Heart right ventricle (tissue), 16 donors: ENCODE measurements at regions of chr6 and their contacts with region 1.

Region 1: DNA sequence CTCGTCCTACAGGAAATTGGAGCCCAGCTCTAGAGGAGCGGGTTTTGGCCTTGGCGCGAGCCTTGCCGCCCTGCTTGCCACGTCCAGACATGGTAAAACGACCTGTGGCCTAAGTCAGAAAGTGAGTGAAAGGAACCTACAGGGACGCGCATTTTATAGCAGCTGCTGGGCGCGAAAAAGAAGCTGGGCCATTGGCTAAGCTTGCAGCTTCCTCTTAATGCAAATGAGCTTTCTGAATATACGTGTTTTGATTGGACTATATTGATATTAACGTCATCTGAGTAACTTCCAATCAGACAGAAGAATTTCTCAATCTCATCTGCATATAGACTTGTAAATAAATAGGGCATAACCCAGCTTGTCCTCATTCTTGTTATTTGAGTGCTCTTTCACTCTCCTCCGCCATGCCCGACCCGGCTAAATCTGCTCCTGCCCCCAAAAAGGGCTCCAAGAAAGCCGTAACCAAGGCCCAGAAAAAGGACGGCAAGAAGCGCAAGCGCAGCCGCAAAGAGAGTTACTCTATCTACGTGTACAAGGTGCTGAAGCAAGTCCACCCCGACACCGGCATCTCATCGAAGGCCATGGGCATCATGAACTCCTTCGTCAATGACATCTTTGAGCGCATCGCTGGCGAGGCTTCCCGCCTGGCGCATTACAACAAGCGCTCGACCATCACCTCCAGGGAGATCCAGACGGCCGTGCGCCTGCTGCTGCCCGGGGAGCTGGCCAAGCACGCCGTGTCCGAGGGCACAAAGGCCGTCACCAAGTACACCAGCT is 18.9 kb downstream of the OR2B2 start:
- DNase-seq: peak; percentile 56 to 77
- ATAC-seq: peak; percentile 39 to 69 (median 52)
- H3K4me3 ChIP-seq: peak overlapping the region; percentile 26 to 93 (median 64)
- H3K27ac ChIP-seq: peak overlapping the region in 7 of 10 donors; percentile 17 to 92 (median 38)
- H3K4me1 ChIP-seq: peaks cover 0 to 49% (median 28%) of the 10 kb centered on the region in 9 donors
- H3K27me3 ChIP-seq: peaks cover 0 to 48% (median 45%) of the 10 kb centered on the region in 7 donors
- CTCF ChIP-seq: no peak

Region 2: DNA sequence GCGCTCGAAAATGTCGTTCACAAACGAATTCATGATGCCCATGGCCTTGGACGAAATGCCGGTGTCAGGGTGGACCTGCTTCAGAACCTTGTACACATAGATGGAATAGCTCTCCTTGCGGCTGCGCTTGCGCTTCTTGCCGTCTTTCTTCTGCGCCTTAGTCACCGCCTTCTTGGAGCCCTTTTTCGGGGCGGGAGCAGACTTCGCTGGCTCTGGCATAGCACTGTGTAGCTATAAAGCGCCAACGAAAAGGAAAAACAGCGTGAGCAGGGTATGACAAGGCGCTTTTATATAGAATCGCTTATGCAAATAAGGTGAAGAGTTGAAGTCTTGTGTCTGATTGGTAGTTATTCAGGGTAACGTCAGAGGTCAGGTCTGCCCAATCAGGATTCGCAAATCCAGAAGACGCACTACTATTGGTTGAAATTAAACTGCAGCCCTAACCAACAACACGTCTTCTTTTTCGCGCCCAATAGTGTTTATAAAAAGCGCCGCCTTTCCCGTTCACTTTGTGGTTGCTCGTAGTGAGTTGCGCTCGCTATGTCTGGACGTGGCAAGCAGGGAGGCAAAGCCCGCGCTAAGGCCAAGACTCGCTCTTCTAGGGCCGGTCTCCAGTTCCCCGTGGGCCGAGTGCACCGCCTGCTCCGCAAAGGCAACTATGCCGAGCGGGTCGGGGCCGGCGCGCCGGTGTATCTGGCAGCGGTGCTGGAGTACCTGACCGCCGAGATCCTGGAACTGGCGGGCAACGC is 760.5 kb before region 1 on chr6:
- intact Hi-C with region 1: loop called in 2 of 10 experiments (anchors 10 kb)
- DNase-seq: peak; percentile 72 to 91
- ATAC-seq: peak; percentile 95 to 97 (median 96)
- H3K4me3 ChIP-seq: peak overlapping the region; percentile 31 to 67 (median 64)
- H3K27ac ChIP-seq: peak overlapping the region; percentile 11 to 90 (median 79)
- H3K4me1 ChIP-seq: peaks cover 0 to 42% (median 14%) of the 10 kb centered on the region in 9 donors
- H3K27me3 ChIP-seq: no peaks in the 10 kb centered on the region
- CTCF ChIP-seq: peak in 1 of 9 donors; percentile 6

Region 3: DNA sequence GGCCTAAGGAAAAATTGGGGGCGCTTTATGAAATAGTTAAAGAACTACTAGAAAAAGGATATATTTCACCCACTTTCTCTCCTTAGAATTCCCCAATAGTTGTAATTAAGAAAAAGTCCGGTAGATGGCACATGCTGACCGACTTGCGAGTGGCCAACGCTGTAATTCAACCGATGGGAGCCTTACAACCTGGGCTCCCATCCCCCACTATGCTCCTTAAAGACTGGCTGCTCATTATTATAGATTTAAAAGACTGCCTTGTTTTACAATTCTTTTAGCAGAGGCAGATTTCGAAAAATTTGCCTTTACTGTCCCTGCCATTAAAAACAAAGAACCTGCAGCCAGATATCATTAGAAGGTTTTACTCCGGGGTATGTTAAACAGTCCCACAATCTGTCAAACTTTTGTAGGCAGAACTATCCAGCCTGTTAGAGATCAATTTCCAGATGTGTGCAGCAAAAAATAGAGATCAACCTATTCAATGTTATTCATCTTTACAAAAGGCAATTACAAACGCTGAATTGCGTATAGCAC is 704.3 kb before region 1 on chr6:
- intact Hi-C with region 1: loop called in 5 of 10 experiments (anchors 2 to 10 kb)
- DNase-seq: peak in 1 of 2 donors; percentile 59
- ATAC-seq: peak; percentile 88 to 97 (median 93)
- H3K4me3 ChIP-seq: peak overlapping the region; percentile 38 to 73 (median 64)
- H3K27ac ChIP-seq: peak overlapping the region in 9 of 10 donors; percentile 49 to 80 (median 63)
- H3K4me1 ChIP-seq: peaks cover 0 to 12% (median 4%) of the 10 kb centered on the region in 9 donors
- H3K27me3 ChIP-seq: peaks cover 0 to 10% (median 0%) of the 10 kb centered on the region in 7 donors
- CTCF ChIP-seq: peak; percentile 70 to 87 (median 79)

Region 4: DNA sequence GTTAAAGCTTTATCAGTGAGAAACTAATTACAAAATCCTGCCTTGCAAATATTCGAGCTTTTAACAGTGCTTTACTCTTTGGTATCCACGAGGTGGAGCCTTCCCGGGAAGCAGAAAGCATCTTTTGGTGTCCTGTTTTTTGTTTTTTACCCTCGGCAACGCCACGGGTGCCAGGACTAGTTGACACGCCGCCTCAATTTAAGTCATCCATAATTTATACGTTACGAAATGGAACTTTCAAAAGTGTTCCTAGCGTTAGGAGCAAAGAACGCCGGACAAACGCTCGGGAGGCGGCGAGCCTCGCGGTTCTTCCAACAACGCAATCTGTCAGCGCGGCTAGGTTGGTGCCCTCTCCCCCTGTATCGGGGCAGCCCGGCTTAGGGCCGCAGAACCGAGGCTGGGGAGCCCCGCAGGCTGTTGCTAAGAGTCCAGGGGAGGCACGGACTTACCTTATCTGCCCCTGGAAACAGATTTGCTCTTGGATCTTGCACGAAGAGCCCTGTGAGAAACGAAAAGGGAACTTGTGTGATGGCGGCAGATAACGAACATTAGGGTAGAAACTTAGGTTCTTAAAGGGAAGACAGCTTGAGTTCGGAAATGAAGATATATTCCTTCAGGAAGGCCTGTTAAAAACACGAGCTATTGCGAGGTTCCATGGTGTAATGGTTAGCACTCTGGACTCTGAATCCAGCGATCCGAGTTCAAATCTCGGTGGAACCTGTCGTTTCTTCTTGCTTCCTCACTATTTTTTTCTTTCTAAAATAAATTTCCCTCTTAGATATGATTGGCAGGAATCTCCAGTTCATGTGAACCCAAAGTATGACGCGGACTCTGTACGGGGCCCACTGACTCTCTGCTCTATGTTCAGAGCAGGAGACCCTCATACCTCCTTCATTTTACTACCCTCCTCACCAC is 374.1 kb before region 1 on chr6:
- intact Hi-C with region 1: loop called in 5 of 10 experiments (anchors 2 to 10 kb)
- DNase-seq: peak; percentile 43 to 55
- ATAC-seq: peak; percentile 87 to 97 (median 94)
- H3K4me3 ChIP-seq: peak overlapping the region; percentile 52 to 94 (median 72)
- H3K27ac ChIP-seq: peak overlapping the region; percentile 27 to 89 (median 81)
- H3K4me1 ChIP-seq: peaks cover 0 to 12% (median 7%) of the 10 kb centered on the region in 9 donors
- H3K27me3 ChIP-seq: peaks cover 0 to 29% (median 22%) of the 10 kb centered on the region in 7 donors
- CTCF ChIP-seq: peak; percentile 49 to 80 (median 65)

Region 5: GRCh38 chr6:27809939-27810767 is 83.1 kb before region 1 on chr6:
- intact Hi-C with region 1: loop called in 1 of 10 experiments (anchors 10 kb)
- DNase-seq: peak; percentile 54 to 78
- ATAC-seq: peak; percentile 81 to 86 (median 82)
- H3K4me3 ChIP-seq: peak overlapping the region; percentile 11 to 69 (median 61)
- H3K27ac ChIP-seq: peak overlapping the region in 9 of 10 donors; percentile 34 to 92 (median 75)
- H3K4me1 ChIP-seq: peaks cover 0 to 53% (median 9%) of the 10 kb centered on the region in 9 donors
- H3K27me3 ChIP-seq: peaks cover 6 to 95% (median 47%) of the 10 kb centered on the region in 7 donors
- CTCF ChIP-seq: peak in 1 of 9 donors; percentile 24

Region 6: DNA sequence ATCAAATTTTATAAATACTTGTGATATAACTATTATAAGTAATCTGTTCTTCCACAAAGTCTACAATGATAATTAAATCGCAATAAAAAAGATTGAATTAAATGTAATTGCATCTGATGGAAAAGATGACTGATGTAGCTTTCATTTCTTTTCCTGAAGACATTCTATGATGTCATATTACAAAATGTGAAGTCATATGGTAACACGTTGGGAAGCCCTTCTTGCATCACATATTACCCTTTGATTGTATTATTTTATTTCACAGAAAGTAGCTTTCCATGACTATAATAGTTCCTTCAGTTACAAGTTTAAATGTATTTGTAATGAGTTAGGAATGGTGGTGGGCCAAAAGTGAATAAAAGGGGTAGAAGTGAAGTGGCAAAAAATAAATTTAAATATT is 38.0 kb after region 1 on chr6:
- intact Hi-C with region 1: no loop called
- DNase-seq: no peak
- ATAC-seq: no peak
- H3K4me3 ChIP-seq: no peak overlapping the region
- H3K27ac ChIP-seq: no peak overlapping the region
- H3K4me1 ChIP-seq: no peaks in the 10 kb centered on the region
- H3K27me3 ChIP-seq: peaks cover 0 to 29% (median 16%) of the 10 kb centered on the region in 7 donors
- CTCF ChIP-seq: no peak

Region 7: DNA sequence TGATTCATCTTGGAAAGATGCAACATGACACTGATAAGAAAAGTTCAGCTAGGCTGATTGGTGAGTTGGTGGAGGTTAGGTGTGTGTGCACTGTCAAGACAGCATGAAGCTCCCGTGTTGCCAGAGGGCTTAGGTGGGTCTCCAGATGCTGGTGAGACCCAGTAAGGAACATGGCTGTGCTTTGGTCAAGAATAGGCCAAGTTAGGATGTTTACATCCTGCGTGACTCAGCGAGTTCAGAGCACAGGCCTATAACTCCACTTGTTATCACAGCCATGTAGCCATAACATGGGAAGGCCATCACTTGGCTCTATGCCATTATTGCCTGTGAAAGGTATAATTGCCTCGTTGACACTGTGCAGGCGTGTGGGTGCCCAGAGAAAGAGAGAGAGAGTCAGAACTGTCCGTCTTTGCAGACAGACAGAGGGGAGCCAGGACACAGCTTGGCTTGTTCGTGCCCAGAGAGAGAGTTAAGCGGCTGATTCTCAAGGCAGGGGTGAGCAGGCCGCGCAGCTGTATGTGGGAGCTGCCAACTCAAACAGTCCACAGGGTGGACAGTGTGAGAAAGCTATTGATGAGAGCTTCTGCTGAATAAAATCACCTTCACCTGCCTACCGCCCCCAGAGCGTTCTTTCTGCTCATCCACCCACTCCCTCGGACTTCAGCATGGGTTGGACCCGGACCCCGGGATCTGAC is 107.3 kb after region 1 on chr6:
- intact Hi-C with region 1: no loop called
- DNase-seq: no peak
- ATAC-seq: no peak
- H3K4me3 ChIP-seq: no peak overlapping the region
- H3K27ac ChIP-seq: no peak overlapping the region
- H3K4me1 ChIP-seq: no peaks in the 10 kb centered on the region
- H3K27me3 ChIP-seq: peaks cover 0 to 18% (median 9%) of the 10 kb centered on the region in 7 donors
- CTCF ChIP-seq: no peak

Region 8: DNA sequence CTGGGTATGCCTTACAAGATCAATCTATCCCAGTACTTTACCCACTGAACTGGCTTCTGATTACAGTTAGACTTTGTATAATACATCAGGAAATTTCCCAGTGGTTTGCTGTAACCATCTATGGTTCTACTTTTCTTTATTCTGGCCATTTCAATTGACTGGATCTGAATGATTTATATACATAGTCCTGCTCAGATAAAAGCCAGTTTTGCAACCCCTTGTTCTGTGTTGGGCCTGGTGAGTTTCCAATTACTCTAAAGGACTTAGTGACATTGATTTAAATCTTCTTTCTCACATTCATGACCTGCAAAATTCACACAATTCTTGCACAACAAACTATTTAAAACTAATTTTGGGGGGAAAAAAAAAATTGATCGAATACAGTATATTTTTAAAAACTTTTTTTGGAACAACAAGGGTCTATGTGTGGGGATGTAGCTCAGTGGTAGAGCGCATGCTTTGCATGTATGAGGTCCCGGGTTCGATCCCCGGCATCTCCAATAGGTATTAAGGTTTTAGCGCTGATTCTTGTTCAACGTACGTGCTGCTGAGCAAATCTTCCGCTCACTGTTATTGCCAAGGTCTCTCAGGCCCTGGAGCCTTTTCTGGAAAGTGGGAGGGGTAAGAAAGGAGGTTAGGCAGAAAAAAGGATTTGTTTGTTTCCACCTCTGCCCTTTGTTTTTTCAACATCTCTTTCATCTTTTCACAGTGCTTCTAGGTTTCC is 749.9 kb after region 1 on chr6:
- intact Hi-C with region 1: no loop called
- DNase-seq: no peak
- ATAC-seq: no peak
- H3K4me3 ChIP-seq: no peak overlapping the region
- H3K27ac ChIP-seq: no peak overlapping the region
- H3K4me1 ChIP-seq: peaks cover 0 to 4% (median 0%) of the 10 kb centered on the region in 9 donors
- H3K27me3 ChIP-seq: peaks cover 0 to 53% (median 44%) of the 10 kb centered on the region in 7 donors
- CTCF ChIP-seq: no peak